ENCODE measurements at regions of chr17 and their contacts with region 1.

Region 1: DNA sequence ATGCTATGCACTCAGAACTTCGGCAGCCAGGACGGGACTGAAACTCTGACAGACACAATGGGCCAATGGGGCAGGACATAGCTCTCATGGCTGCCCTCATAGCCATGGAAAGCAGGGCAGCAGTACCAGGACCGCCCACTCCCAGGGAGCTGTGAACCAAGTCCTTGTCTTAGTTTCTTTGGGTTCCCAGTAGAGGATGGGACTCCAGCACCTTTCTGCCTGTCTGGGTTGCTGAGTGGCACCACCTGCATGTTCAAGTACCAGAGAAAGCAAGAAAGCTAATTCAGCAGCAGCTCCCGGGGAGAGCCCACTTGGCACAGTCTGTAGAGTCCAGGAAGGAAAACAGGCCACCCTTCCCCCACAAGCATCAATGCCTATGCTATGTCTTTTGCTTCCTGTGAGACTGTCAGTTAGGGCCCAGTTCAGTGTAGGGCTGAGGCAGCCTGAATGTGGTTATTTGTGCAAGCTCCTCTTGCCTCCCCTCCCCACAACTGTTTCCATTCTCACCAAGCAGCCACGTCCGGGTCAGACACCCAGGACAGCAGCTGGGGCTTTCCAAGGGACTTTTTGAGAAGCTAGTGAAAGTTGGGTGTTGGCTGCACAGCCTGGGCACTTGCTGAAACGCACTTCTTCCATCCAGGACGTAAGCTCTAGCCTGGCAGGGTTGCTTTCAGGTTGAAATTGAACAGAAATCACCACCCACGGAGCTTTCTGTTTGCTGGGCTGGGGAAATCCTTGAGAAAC is 7.8 kb downstream of the SUPT4H1 start:
- DNase-seq: peak; percentile 97
- ATAC-seq: peak; percentile 75
- H3K4me3 Mint-ChIP-seq: peak overlapping the region; percentile 83
- H3K27ac Mint-ChIP-seq: peak overlapping the region; percentile 98
- H3K4me1 Mint-ChIP-seq: peaks cover 87% of the 10 kb centered on the region
- H3K27me3 Mint-ChIP-seq: no peaks in the 10 kb centered on the region

Region 2: GRCh38 chr17:58329035-58329809 is 15.0 kb before region 1 on chr17:
- CTCF ChIA-PET with region 1: interaction called, 112 read pairs
- DNase-seq: peak; percentile 94
- ATAC-seq: peak; percentile 25
- H3K4me3 Mint-ChIP-seq: peak overlapping the region; percentile 83
- H3K27ac Mint-ChIP-seq: peak overlapping the region; percentile 99
- H3K4me1 Mint-ChIP-seq: peaks cover 35% of the 10 kb centered on the region
- H3K27me3 Mint-ChIP-seq: peaks cover 3% of the 10 kb centered on the region

Region 3: GRCh38 chr17:58417300-58418092 is 73.3 kb after region 1 on chr17 and contains the start of gene RNF43:
- CTCF ChIA-PET with region 1: interaction called, 17 read pairs
- DNase-seq: peak; percentile 90
- ATAC-seq: peak; percentile 99
- H3K4me3 Mint-ChIP-seq: no peak within 1 kb of the TSS
- H3K27ac Mint-ChIP-seq: no peak within 1 kb of the TSS
- H3K4me1 Mint-ChIP-seq: peaks cover 24% of the 10 kb centered on the region
- H3K27me3 Mint-ChIP-seq: peaks cover 2% of the 10 kb centered on the region
- total RNA-seq, gene RNF43: 0.23 to 0.52 TPM